Activated CD4-positive, alpha-beta T cell treated with anti-CD3 and anti-CD28 coated beads, Interleukin-2, amount 10 ng/mL, durations not matched to agents 7 days and 5 days (primary cell): ENCODE measurements at regions of chrX and their contacts with region 1.

Region 1: GRCh38 chrX:56788717-56789122 is 59.7 kb downstream of the NBDY start:
- DNase-seq: peak; percentile 78
- H3K4me3 Mint-ChIP-seq: no peak overlapping the region
- H3K27ac Mint-ChIP-seq: peak overlapping the region; percentile 78
- H3K4me1 Mint-ChIP-seq: peaks cover 53% of the 10 kb centered on the region
- H3K27me3 Mint-ChIP-seq: no peaks in the 10 kb centered on the region

Region 2: DNA sequence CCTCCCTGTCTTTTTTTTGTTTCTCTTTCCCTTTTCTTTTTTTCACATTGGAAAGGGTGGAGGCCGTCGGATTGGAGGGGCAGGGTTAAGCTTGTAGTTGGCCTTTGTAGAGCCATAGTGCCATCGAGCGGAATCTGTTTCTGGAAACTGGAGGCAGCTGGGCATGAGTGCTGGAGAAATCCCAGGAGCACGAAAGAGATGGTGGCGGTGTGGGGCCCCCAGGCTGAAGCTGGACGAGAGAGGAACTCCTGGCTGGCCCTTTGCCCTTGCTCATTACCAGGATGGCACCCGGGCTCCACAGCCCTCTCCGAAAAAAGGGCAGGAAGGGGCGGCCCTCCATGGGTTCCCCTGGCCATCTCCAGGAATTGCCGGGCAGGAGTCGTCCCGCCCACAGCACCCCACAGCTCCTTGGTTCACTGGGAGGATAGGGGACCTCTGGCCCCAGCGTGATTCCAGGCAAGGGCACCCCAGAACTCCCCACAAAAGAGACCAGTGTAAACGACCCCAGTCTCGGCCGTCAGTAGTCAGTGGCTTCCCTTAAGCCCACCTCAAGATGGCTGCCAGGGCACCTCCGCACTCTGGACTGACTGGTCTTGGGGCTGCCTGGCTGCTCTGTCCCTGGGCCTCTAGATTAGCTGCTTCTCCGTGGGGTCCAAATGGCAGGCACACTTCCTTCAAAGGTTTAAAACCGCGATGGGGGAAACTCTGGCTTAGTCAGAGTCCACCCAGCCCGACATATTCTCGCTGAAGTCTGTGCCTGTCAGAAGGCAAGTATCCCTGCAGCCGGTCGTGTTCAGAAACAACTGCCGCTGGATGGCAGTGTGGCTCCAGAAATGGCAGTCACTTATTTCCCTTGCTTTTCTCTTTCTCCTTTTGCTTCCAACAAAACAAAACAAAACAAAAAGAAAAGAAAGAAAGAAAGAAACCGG is 14.5 kb after region 1 on chrX:
- CTCF ChIA-PET with region 1: interaction called, 10 read pairs
- POLR2A ChIA-PET with region 1: no interaction called
- DNase-seq: peak; percentile 69
- H3K4me3 Mint-ChIP-seq: peak overlapping the region; percentile 43
- H3K27ac Mint-ChIP-seq: peak overlapping the region; percentile 83
- H3K4me1 Mint-ChIP-seq: peaks cover 43% of the 10 kb centered on the region
- H3K27me3 Mint-ChIP-seq: no peaks in the 10 kb centered on the region